Activated CD4-positive, alpha-beta T cell treated with anti-CD3 and anti-CD28 coated beads for 36 hours (primary cell): ENCODE measurements at regions of chr17 and their contacts with region 1.

Region 1: DNA sequence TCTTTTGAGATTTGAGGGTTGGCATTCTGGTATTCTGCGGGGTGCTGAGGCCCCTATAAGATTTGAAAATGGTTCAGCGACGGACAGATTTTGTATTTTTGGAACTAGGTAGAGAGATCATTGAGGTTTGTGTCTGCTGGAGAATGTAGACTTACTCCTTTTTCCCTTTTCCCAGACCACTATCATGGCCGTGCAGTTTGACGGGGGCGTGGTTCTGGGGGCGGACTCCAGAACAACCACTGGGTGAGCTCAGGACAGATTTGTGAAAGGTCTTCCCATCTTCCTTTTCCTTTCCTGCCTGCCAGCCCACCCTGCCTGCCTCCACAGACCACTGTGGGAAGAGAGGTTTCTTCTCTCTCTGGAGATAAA is 573 bp downstream of the PSMB6 start:
- DNase-seq: peak; percentile 58
- ATAC-seq: no peak
- H3K4me3 Mint-ChIP-seq: peak overlapping the region; percentile 94
- H3K27ac Mint-ChIP-seq: peak overlapping the region; percentile 97
- H3K4me1 Mint-ChIP-seq: peaks cover 24% of the 10 kb centered on the region
- H3K27me3 Mint-ChIP-seq: peaks cover 3% of the 10 kb centered on the region

Region 2: GRCh38 chr17:4604111-4604644 is 192.4 kb before region 1 on chr17:
- CTCF ChIA-PET with region 1: no interaction called
- POLR2A ChIA-PET with region 1: no interaction called
- intact Hi-C with region 1: no loop called
- DNase-seq: no peak
- ATAC-seq: no peak
- H3K4me3 Mint-ChIP-seq: no peak overlapping the region
- H3K27ac Mint-ChIP-seq: no peak overlapping the region
- H3K4me1 Mint-ChIP-seq: no peaks in the 10 kb centered on the region
- H3K27me3 Mint-ChIP-seq: peaks cover 13% of the 10 kb centered on the region

Region 3: DNA sequence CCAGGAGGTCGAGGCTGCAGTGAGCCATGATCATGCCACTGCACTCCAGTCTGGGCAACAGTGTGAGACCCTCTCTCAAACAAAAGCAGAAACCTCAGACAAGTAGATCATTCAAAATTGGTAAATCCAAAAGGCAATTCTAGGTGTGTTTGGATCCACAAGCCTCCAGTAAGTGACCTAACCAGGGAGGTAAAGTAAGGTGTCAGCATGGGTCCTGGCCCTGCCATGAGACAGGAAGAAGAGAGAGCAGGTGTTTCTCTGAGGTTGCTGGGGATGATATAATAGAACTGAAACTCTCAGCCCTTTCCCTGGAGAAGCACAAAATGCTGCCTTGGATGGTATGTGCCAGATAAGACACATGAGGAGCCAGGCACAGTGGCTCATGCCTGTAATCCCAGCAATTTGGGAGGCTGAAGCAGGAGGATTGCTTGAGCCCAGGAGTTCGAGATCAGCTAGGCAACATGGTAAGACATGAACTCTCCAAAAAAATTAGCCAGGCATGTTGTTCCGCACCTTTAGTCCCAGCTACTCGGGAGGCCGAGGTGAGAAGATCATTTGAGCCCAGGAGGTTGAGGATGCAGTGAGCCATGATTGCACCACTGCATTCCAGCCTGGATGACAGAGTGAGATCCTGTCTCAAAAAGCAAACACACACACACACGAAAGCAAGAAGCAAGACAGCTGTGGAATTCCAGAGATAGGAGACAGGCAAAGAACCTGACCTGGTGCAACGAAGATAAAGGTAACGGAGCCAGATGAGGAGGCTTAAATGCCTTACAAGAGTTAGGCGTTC is 18.4 kb before region 1 on chr17:
- CTCF ChIA-PET with region 1: no interaction called
- POLR2A ChIA-PET with region 1: no interaction called
- intact Hi-C with region 1: no loop called
- DNase-seq: no peak
- ATAC-seq: no peak
- H3K4me3 Mint-ChIP-seq: no peak overlapping the region
- H3K27ac Mint-ChIP-seq: no peak overlapping the region
- H3K4me1 Mint-ChIP-seq: no peaks in the 10 kb centered on the region
- H3K27me3 Mint-ChIP-seq: peaks cover 22% of the 10 kb centered on the region

Region 4: DNA sequence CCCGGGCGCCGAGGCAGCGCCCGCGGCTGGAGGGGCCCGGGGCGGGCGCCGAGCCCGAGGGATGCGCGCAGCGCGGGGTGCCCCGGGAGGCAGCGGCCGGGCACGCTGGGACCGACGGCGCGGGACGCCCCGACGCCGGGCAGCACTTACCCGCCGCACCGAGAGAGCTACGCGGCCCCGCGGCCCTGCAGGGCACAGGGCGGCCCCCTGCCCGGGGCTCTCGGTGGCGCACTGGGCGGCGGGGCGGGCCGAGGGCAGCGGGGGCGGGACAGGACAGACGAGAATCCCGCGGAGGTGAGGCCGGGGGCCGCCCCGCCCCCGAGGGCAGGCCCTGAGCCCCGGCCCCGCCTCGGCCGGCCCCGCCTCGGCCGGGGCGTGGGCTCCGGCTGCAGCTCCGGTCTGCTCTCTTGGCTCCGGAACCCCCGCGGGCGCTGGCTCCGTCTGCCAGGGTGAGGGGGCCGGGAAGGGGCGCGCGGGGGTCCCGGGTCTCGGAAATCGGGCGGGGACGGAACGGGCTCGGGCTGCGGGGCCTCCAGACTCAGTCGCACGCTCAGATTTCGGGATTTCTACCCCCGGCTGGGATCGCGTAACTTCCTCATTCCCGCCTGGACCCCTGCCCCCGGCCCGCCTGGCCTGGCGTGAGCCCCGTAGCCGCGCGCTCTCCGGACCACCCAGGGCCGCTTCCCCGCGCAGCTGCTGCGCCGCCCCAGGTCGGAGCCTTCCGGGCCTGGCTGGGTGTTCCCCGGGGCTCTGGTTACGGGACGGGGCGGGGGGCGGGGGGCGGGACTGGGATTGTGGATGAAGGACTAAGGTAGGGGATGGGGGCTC is 10.5 kb after region 1 on chr17 and contains the start of gene PLD2:
- CTCF ChIA-PET with region 1: interaction called, 5 read pairs
- POLR2A ChIA-PET with region 1: interaction called, 5 read pairs
- intact Hi-C with region 1: loop called in 1 of 2 experiments (anchors 1 kb)
- DNase-seq: peak; percentile 93
- ATAC-seq: peak; percentile 98
- H3K4me3 Mint-ChIP-seq: peak within 1 kb of the TSS; percentile 73
- H3K27ac Mint-ChIP-seq: no peak within 1 kb of the TSS
- H3K4me1 Mint-ChIP-seq: peaks cover 7% of the 10 kb centered on the region
- H3K27me3 Mint-ChIP-seq: no peaks in the 10 kb centered on the region
- total RNA-seq, gene PLD2: 12.3 to 14.1 TPM

Region 5: DNA sequence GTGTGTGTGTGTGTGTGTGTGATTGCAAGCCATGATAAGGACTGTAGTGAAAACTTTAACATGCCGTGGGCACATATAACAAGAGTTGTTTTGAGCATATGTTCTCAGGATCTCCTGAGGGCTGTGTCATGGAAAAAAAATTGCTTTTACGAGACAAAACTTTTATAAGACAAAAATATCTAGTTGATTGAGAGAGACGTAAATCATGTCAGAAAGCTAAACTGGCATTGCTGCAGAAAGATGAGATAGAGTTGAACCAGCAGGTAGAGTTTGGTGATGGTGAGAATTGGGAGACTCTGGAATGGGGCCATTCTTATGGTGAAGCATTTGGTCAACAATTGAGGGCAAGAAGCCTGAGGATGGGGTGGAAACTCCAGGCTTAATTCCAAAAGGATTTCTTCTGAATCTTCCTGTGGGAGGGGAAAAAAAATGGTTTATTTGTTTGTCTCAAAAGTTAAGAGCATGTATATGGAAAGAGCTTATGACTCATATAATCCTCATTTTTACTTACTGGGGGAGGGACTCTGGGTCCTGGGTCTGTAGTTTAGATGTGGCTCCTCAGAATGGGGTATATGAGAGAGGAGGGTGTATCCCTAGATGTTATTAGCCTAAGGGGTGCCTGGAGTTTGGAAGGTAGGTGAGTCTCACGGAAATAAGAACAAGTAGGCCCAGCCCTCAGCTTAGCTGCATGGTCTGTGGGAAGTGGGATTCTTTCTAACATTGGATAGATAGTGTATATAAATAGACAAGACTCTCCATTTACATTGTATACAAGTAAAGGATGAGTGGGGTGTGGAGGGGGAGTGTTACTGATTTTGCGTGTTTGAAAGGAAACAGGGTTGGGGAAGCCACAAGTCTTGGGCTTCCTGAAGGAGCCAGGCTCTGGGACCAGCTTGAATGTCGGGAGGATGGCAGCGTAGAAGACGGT is 43.7 kb after region 1 on chr17:
- CTCF ChIA-PET with region 1: no interaction called
- POLR2A ChIA-PET with region 1: no interaction called
- intact Hi-C with region 1: no loop called
- DNase-seq: no peak
- ATAC-seq: peak; percentile 45
- H3K4me3 Mint-ChIP-seq: no peak overlapping the region
- H3K27ac Mint-ChIP-seq: peak overlapping the region; percentile 72
- H3K4me1 Mint-ChIP-seq: peaks cover 51% of the 10 kb centered on the region
- H3K27me3 Mint-ChIP-seq: no peaks in the 10 kb centered on the region

Region 6: GRCh38 chr17:4903051-4903818 is 106.7 kb after region 1 on chr17 and contains the start of gene CHRNE:
- CTCF ChIA-PET with region 1: no interaction called
- POLR2A ChIA-PET with region 1: no interaction called
- intact Hi-C with region 1: loop called in 1 of 2 experiments (anchors 1 kb)
- DNase-seq: peak; percentile 89
- ATAC-seq: peak; percentile 44
- H3K4me3 Mint-ChIP-seq: peak within 1 kb of the TSS; percentile 65
- H3K27ac Mint-ChIP-seq: peak within 1 kb of the TSS; percentile 72
- H3K4me1 Mint-ChIP-seq: peaks cover 26% of the 10 kb centered on the region
- H3K27me3 Mint-ChIP-seq: no peaks in the 10 kb centered on the region
- total RNA-seq, gene CHRNE: 0.59 to 0.84 TPM